ENCODE measurements at regions of chr4 and their contacts with region 1.

Region 1: GRCh38 chr4:19266566-19266965 is 985.1 kb upstream of the SLIT2 start:
- DNase-seq: no peak
- H3K4me3 ChIP-seq: no peak overlapping the region
- H3K27me3 ChIP-seq: no peaks in the 10 kb centered on the region
- CTCF ChIP-seq: no peak

Region 2: GRCh38 chr4:19399001-19399400 is 132.4 kb after region 1 on chr4:
- CTCF ChIA-PET with region 1: no interaction called
- POLR2A ChIA-PET with region 1: no interaction called
- DNase-seq: no peak
- H3K4me3 ChIP-seq: no peak overlapping the region
- H3K27me3 ChIP-seq: no peaks in the 10 kb centered on the region
- CTCF ChIP-seq: no peak

Region 3: GRCh38 chr4:20272411-20272872 is 1005.9 kb after region 1 on chr4:
- CTCF ChIA-PET with region 1: no interaction called
- POLR2A ChIA-PET with region 1: interaction called, 10 read pairs
- DNase-seq: no peak
- H3K4me3 ChIP-seq: no peak overlapping the region
- H3K27me3 ChIP-seq: no peaks in the 10 kb centered on the region
- CTCF ChIP-seq: no peak